ENCODE measurements at regions of chr2 and their contacts with region 1.

Region 1: GRCh38 chr2:112764071-112765044 is at the start of gene CKAP2L:
- DNase-seq: peak; percentile 98
- ATAC-seq: peak; percentile 96
- H3K4me3 ChIP-seq: peak within 1 kb of the TSS; percentile 80 to 91 (median 90)
- H3K27ac ChIP-seq: peak within 1 kb of the TSS; percentile 72
- H3K4me1 ChIP-seq: peaks cover 58% of the 10 kb centered on the region
- H3K27me3 ChIP-seq: no peaks in the 10 kb centered on the region; a peak in 1 of 5 replicates
- CTCF ChIP-seq: peak; percentile 57
- EP300 ChIP-seq: peak in 1 of 2 experiments; percentile 8; a peak in 1 of 4 replicates
- POLR2A ChIP-seq: peak; percentile 29 to 64; a peak in 3 of 4 replicates
- RAD21 ChIP-seq: no peak; the same call in none of the 2 replicates
- total RNA-seq, gene CKAP2L: 9.5 and 21.5 TPM in 2 replicates

Region 2: GRCh38 chr2:112547333-112547732 is 217.0 kb before region 1 on chr2:
- CTCF ChIA-PET with region 1: no interaction called
- POLR2A ChIA-PET with region 1: no interaction called
- in situ Hi-C with region 1: no loop called
- intact Hi-C with region 1: no loop called
- DNase-seq: peak; percentile 41
- ATAC-seq: no peak
- H3K4me3 ChIP-seq: no peak overlapping the region
- H3K27ac ChIP-seq: no peak overlapping the region
- H3K4me1 ChIP-seq: peaks cover 25% of the 10 kb centered on the region
- H3K27me3 ChIP-seq: no peaks in the 10 kb centered on the region; a peak in 1 of 5 replicates
- CTCF ChIP-seq: no peak
- EP300 ChIP-seq: no peak
- POLR2A ChIP-seq: no peak
- RAD21 ChIP-seq: no peak

Region 3: DNA sequence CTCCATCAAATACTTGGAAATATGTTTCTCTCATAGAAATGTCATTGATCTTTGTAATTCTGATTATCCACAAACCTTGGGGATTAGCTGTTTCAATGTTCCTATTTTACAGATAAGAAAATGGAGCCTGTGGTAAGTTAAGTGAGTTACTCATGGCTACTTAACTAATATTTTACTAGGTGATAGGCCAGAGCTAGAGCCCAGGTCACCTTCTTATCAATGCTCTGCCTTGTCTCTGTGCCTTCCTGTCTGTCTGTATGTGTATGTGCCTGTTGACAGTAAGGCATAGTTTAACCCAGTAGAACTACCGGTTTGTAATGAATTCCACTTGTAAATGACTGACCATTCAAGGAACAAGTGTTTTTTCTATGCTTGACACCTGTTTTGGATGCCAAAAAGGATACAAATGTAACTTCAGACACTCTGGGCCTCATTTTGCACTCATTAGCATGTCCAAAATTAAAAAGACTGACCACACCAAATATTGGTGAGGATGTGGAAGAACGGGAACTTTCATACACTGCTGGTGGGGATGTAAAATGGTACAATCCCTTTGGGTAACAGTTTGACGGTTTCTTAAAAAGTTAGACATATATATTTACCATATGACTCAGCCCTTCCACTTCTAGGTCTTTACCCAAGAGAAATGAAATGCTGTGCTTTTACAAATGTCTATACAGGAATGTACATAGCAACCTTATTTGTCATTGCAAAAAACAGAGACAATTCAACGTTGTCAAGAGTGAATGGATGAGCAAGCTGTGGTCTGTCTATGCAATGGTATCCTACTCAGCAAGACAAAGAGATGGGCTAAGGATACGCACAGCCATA is 39.5 kb after region 1 on chr2:
- CTCF ChIA-PET with region 1: no interaction called
- POLR2A ChIA-PET with region 1: no interaction called
- in situ Hi-C with region 1: loop called (anchors 5 kb)
- intact Hi-C with region 1: loop called (anchors 5 kb)
- DNase-seq: peak; percentile 92
- ATAC-seq: peak; percentile 92
- H3K4me3 ChIP-seq: peak overlapping the region in 1 of 3 experiments; percentile 6; a peak in 1 of 6 replicates
- H3K27ac ChIP-seq: peak overlapping the region; percentile 86
- H3K4me1 ChIP-seq: peaks cover 58% of the 10 kb centered on the region
- H3K27me3 ChIP-seq: no peaks in the 10 kb centered on the region
- CTCF ChIP-seq: no peak
- EP300 ChIP-seq: peak; percentile 90 to 96
- POLR2A ChIP-seq: no peak
- RAD21 ChIP-seq: no peak

Region 4: DNA sequence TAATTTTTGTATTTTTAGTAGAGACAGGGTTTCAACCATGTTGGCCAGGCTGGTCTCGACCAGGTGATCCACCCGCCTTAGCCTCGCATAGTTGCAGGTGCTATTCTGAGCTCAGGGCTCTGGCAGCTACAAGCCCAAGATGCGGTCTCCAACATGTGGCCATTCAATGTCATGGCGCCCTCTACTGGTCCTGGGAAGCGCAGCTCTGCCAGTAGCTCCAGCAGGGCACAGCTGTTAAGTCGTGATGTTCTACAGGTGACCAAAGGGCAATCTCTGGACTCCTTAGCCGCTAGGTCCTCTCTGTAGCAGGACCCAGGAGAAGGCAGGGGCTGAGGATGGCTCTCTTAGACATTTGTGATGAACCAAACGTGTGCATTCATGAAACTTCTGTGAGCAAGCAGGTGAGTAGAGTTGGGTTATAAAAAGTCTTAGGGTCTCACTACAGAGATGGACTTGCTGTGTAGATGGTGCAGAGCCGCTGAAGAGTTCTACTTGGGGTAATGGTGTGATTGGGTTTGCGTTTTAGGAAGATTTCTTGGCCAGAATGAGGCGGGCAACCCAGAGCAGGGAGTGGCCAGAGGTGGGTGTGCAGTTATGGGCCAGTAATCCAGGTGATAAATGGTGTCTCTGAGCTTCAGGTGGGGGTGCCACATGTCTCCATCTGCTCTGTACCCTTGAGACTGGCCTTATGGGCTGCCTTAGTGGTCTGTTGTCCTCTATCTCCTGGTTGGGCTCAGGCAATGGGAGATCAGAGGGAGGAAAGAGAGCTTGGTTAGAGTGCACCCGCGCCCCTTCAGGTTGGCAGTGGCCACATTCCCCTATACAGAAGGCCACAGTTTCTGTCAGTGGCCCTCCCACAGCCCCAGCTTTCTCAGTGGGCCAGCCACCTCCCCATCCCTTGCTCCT is 177.6 kb after region 1 on chr2:
- CTCF ChIA-PET with region 1: no interaction called
- POLR2A ChIA-PET with region 1: no interaction called
- in situ Hi-C with region 1: no loop called
- intact Hi-C with region 1: loop called (anchors 5 kb)
- DNase-seq: peak; percentile 70
- ATAC-seq: peak; percentile 99
- H3K4me3 ChIP-seq: no peak overlapping the region
- H3K27ac ChIP-seq: no peak overlapping the region
- H3K4me1 ChIP-seq: peaks cover 8% of the 10 kb centered on the region; the same call in 1 of the 2 replicates
- H3K27me3 ChIP-seq: no peaks in the 10 kb centered on the region; a peak in 1 of 5 replicates
- CTCF ChIP-seq: peak; percentile 98
- EP300 ChIP-seq: no peak
- POLR2A ChIP-seq: no peak
- RAD21 ChIP-seq: peak; percentile 86

Region 5: GRCh38 chr2:113248997-113249770 is 484.8 kb after region 1 on chr2:
- CTCF ChIA-PET with region 1: no interaction called
- POLR2A ChIA-PET with region 1: no interaction called
- in situ Hi-C with region 1: no loop called
- intact Hi-C with region 1: no loop called
- DNase-seq: peak; percentile 72
- ATAC-seq: peak; percentile 82
- H3K4me3 ChIP-seq: no peak overlapping the region
- H3K27ac ChIP-seq: no peak overlapping the region
- H3K4me1 ChIP-seq: peaks cover 44% of the 10 kb centered on the region
- H3K27me3 ChIP-seq: no peaks in the 10 kb centered on the region; a peak in 1 of 5 replicates
- CTCF ChIP-seq: peak; percentile 98
- EP300 ChIP-seq: peak in 1 of 2 experiments; percentile 46; a peak in 1 of 4 replicates
- POLR2A ChIP-seq: no peak
- RAD21 ChIP-seq: peak; percentile 97